Endothelial cell of umbilical vein (primary cell): ENCODE measurements at regions of chr9 and their contacts with region 1.

Region 1: GRCh38 chr9:77910194-77910621 is 121.4 kb downstream of the GNAQ start:
- DNase-seq: peak; percentile 88
- H3K4me3 ChIP-seq: peak overlapping the region in 1 of 3 experiments; percentile 19
- H3K27ac ChIP-seq: peak overlapping the region; percentile 67
- H3K4me1 ChIP-seq: peaks cover 44% of the 10 kb centered on the region
- H3K27me3 ChIP-seq: no peaks in the 10 kb centered on the region
- CTCF ChIP-seq: no peak
- POLR2A ChIP-seq: no peak

Region 2: GRCh38 chr9:77316058-77316457 is 594.1 kb before region 1 on chr9:
- CTCF ChIA-PET with region 1: no interaction called
- POLR2A ChIA-PET with region 1: no interaction called
- dilution Hi-C with region 1: no loop called
- intact Hi-C with region 1: no loop called
- DNase-seq: no peak
- H3K4me3 ChIP-seq: no peak overlapping the region
- H3K27ac ChIP-seq: no peak overlapping the region
- H3K4me1 ChIP-seq: no peaks in the 10 kb centered on the region
- H3K27me3 ChIP-seq: no peaks in the 10 kb centered on the region
- CTCF ChIP-seq: no peak
- POLR2A ChIP-seq: no peak

Region 3: GRCh38 chr9:77816633-77817341 is 93.4 kb before region 1 on chr9:
- CTCF ChIA-PET with region 1: no interaction called
- POLR2A ChIA-PET with region 1: no interaction called
- dilution Hi-C with region 1: no loop called
- intact Hi-C with region 1: no loop called
- DNase-seq: peak; percentile 46
- H3K4me3 ChIP-seq: no peak overlapping the region
- H3K27ac ChIP-seq: no peak overlapping the region
- H3K4me1 ChIP-seq: peaks cover 22% of the 10 kb centered on the region
- H3K27me3 ChIP-seq: no peaks in the 10 kb centered on the region
- CTCF ChIP-seq: no peak
- POLR2A ChIP-seq: no peak

Region 4: DNA sequence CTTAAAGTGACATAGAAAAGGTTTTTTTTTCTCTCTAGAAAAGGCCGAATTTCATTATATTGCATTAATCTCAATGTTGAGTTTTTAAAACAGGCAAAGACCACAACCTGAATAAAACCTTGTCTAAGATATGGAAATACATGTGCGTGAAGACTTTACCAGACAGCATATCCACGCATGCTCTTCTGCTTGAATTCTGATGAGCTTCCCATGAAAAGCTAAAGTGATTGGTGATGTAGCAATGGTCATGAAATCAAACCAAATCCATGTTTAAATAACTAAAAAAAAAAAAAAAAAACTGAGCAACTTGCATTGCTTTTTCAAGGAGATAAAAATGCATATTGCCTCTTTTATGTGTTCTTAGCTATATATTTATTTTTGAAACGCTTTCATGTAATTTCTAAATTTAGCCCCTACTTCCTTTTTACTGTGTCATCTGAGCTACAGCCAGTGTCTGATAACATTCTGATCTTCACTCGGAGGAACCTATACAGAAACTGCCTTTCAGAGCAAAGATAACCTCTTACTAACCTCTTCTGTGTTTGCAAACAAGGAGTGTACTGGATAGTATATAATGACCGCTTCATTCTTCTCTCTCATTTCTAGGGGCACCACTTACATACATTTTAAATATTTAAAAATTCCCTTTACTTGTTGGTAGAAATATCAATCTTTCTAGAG is 83.0 kb before region 1 on chr9:
- CTCF ChIA-PET with region 1: no interaction called
- POLR2A ChIA-PET with region 1: no interaction called
- dilution Hi-C with region 1: no loop called
- intact Hi-C with region 1: no loop called
- DNase-seq: peak; percentile 24
- H3K4me3 ChIP-seq: no peak overlapping the region
- H3K27ac ChIP-seq: no peak overlapping the region
- H3K4me1 ChIP-seq: peaks cover 8% of the 10 kb centered on the region
- H3K27me3 ChIP-seq: no peaks in the 10 kb centered on the region
- CTCF ChIP-seq: no peak
- POLR2A ChIP-seq: no peak

Region 5: GRCh38 chr9:77960356-77961153 is 50.3 kb after region 1 on chr9:
- CTCF ChIA-PET with region 1: no interaction called
- POLR2A ChIA-PET with region 1: no interaction called
- dilution Hi-C with region 1: no loop called
- intact Hi-C with region 1: loop called (anchors 2 kb)
- DNase-seq: no peak
- H3K4me3 ChIP-seq: no peak overlapping the region
- H3K27ac ChIP-seq: no peak overlapping the region
- H3K4me1 ChIP-seq: peaks cover 38% of the 10 kb centered on the region
- H3K27me3 ChIP-seq: no peaks in the 10 kb centered on the region
- CTCF ChIP-seq: no peak
- POLR2A ChIP-seq: no peak